Heart left ventricle (tissue), 16 donors: ENCODE measurements at regions of chr3 and their contacts with region 1.

Region 1: DNA sequence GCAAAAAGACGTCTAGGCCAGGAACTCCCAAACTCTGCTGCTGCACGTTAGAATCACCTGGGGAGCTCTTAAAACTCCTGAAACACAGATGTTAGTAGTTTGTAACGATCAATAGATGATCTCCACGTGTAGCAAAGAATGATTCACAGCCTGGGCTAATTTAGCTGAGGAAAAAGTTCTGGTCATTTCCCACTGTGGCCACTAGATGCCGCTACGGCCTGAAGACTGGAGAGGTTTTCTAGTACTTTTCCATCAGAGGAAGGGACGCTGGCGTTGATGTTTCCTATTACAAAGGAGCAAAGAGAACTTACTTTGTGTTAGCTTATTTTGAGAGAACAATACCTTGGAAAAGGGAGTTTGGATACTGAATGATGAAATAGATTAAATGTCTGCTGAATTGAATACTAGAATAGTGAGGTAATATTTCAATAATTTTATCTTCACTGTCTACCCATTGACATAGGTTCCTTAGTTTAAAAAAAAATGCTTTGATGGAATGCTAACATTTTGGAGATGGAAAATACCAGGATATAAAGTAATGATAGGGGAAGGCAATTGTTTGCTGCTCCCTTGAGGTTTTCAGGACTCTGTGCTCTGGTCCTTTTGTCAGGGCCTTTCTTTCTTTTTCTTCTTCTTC is 159.1 kb downstream of the P3H2 start:
- DNase-seq: peak; percentile 66 to 73 (median 71)
- ATAC-seq: peak; percentile 42 to 78 (median 73)
- H3K4me3 ChIP-seq: no peak overlapping the region
- H3K27ac ChIP-seq: peak overlapping the region in 5 of 12 donors; percentile 8 to 33 (median 8)
- H3K4me1 ChIP-seq: peaks cover 0 to 6% (median 0%) of the 10 kb centered on the region in 12 donors
- H3K27me3 ChIP-seq: no peaks in the 10 kb centered on the region
- CTCF ChIP-seq: peak; percentile 83 to 96 (median 91)
- POLR2A ChIP-seq: no peak

Region 2: DNA sequence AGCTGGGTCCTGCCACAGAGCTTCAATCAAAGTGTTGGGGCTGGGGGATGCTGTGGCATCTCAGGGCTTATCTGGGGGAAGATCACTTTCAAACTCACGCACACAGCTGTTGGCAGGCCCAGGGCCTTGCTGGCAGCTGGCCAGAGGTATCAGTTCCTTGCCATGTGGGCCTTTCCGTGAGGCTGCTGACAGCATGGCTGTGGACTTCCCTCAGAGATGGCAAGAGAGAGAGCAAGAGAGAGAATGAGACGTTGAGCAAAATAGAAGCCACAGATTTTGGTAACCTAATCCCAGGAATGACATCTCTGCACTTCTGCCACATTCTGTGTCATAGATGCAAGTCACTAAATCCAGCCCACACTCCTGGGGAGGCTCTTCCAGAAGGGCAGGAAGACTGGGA is 698.9 kb before region 1 on chr3:
- intact Hi-C with region 1: no loop called
- DNase-seq: peak in 2 of 5 donors; percentile 27 to 60
- ATAC-seq: no peak
- H3K4me3 ChIP-seq: no peak overlapping the region
- H3K27ac ChIP-seq: no peak overlapping the region
- H3K4me1 ChIP-seq: peaks cover 0 to 17% (median 5%) of the 10 kb centered on the region in 12 donors
- H3K27me3 ChIP-seq: no peaks in the 10 kb centered on the region
- CTCF ChIP-seq: no peak
- POLR2A ChIP-seq: no peak

Region 3: DNA sequence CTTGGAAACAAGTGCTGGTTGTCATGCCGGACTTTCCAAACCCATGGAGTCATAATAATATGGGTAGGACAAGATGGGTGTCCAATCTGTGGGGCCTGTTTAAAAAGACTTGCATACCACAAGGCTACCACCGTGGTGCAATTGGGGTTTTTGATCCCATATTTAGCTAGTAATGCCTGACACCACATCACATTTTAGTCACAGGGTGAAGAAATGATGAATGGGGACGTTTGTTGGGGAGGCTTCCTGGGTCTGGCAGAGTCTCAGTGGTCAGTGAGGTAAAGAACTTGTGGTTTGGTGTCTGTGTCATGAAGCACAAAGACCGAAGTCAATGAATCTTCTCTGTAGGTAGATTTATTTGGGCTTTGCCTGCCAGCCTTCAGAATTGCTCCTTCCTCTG is 128.1 kb after region 1 on chr3:
- intact Hi-C with region 1: loop called in 1 of 10 experiments (anchors 10 kb)
- DNase-seq: no peak
- ATAC-seq: no peak
- H3K4me3 ChIP-seq: no peak overlapping the region
- H3K27ac ChIP-seq: no peak overlapping the region
- H3K4me1 ChIP-seq: peaks cover 0 to 26% (median 6%) of the 10 kb centered on the region in 12 donors
- H3K27me3 ChIP-seq: no peaks in the 10 kb centered on the region
- CTCF ChIP-seq: no peak
- POLR2A ChIP-seq: no peak

Region 4: DNA sequence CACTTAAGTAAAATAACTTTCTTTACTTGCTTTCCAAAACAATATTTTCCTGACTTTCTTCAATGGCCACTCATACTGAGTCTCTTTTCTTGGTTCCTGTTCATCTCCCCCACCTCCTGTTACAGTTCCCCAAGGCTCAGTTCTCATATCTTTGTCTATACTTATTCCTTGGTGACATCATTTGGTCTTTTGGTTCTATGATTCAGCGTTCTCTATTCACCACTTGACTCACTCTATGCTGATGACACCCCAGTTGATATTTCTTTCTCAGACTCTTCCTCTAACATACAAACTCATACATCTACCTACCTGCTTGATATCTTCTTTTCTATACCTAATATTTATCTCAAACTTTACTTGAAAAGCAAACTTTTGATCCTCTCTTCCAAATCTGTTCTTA is 244.1 kb after region 1 on chr3:
- intact Hi-C with region 1: loop called in 8 of 10 experiments (anchors 2 to 5 kb)
- DNase-seq: no peak
- ATAC-seq: no peak
- H3K4me3 ChIP-seq: no peak overlapping the region
- H3K27ac ChIP-seq: no peak overlapping the region
- H3K4me1 ChIP-seq: peaks cover 0 to 2% (median 0%) of the 10 kb centered on the region in 12 donors
- H3K27me3 ChIP-seq: no peaks in the 10 kb centered on the region
- CTCF ChIP-seq: no peak
- POLR2A ChIP-seq: no peak

Region 5: DNA sequence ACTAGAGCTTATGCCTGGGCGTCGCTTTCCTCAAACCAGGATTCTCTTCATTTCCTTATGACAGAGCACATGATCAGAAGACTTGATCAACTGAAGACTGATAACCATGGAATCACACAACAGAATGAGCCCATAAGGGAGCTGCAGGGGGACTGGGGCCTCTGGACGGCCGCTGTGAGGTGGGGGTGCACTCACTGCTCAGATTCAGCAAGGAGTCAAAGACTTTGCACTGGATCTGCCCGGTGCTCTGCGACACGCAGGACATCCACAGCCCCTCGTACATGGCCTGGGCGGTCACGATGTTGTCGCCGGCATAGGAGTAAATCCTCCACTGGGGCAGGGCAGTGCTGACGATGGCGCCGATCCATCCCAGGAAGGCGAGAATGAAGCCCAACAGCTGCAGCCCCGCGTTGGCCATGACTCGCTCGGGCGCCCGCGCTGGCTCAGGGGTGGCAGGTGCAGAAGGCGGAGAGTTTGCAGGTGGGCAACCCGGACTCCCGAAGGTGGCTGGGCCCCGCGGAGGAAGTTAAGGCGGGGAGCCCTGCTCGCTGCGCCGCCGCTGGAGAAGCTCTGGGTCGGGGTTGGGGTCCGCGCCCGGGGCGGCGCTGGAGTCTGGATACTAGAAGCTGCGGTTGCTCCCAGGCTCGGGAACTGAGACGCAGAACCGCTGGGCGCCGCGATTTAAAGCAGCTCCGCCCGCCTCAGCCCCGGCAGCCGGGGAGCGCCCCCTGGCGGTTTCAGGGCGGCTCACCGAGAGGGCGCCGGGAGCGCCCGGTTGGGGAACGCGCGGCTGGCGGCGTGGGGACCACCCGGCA is 360.4 kb after region 1 on chr3 and contains the start of gene CLDN1:
- intact Hi-C with region 1: loop called (anchors 2 to 5 kb)
- DNase-seq: peak; percentile 76 to 89 (median 79)
- ATAC-seq: peak; percentile 72 to 96 (median 92)
- H3K4me3 ChIP-seq: peak within 1 kb of the TSS; percentile 30 to 72 (median 60)
- H3K27ac ChIP-seq: no peak within 1 kb of the TSS
- H3K4me1 ChIP-seq: peaks cover 0 to 18% (median 13%) of the 10 kb centered on the region in 12 donors
- H3K27me3 ChIP-seq: peaks cover 0 to 25% (median 0%) of the 10 kb centered on the region in 9 donors
- CTCF ChIP-seq: peak; percentile 93 to 99 (median 96)
- POLR2A ChIP-seq: no peak
- total RNA-seq, gene CLDN1: 0.13 to 45.0 (median 0.31) TPM in 6 of 9 donors, not detected in the others

Region 6: DNA sequence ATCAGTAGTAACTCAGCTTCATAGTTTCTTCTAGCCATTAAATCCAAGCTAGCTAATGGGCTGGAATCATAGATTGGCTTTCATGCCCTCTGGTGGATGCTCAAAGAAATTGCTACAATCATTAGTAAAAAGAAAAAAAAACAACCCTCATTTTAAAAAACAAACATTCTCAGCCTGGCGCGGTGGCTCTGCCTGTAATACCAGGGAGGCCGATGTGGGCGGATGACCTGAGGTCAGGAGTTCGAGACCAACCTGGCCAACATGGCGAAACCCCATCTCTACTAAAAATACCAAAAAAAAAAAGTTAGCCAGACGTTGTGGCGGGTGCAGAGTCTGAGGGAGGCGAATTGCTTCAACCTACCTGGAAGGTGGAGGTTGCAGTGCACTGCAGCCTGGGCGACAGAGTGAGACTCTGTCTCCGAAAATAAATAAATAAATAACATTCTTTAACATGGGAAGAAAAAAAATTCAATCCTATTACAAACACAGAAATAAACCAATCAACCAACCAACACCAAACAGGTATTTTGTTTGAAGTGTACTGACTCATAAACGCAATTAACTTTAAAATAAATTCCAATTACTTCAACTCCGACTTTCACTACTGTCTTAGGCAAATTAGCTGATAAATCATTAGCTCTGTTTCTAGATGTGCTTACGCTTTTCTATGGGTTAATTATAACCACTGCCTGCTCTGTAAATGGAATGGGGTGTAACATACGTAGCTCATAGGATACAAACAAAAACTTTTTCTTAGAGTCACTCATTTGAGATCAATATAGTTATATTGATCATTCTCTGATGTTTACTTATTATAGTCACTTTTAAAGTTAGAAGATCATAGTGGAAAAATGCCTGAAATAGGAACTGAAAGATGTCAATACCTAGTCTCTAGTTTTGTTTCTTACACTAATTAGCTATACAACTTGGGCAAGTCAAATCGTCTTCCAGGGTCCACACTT is 463.1 kb after region 1 on chr3:
- intact Hi-C with region 1: loop called in 4 of 10 experiments (anchors 2 to 10 kb)
- DNase-seq: peak in 4 of 5 donors; percentile 20 to 62 (median 44)
- ATAC-seq: peak in 3 of 4 donors; percentile 18 to 67 (median 42)
- H3K4me3 ChIP-seq: no peak overlapping the region
- H3K27ac ChIP-seq: no peak overlapping the region
- H3K4me1 ChIP-seq: peaks cover 0 to 5% (median 0%) of the 10 kb centered on the region in 12 donors
- H3K27me3 ChIP-seq: no peaks in the 10 kb centered on the region
- CTCF ChIP-seq: peak; percentile 36 to 77 (median 60)
- POLR2A ChIP-seq: no peak